Activated CD4-positive, alpha-beta memory T cell treated with anti-CD3 and anti-CD28 coated beads for 36 hours (primary cell): ENCODE measurements at regions of chr9 and their contacts with region 1.

Region 1: GRCh38 chr9:124126571-124127289 is 115.2 kb downstream of the LHX2 start:
- DNase-seq: peak; percentile 87
- H3K4me3 Mint-ChIP-seq: no peak overlapping the region
- H3K27ac Mint-ChIP-seq: no peak overlapping the region
- H3K4me1 Mint-ChIP-seq: peaks cover 4% of the 10 kb centered on the region
- H3K27me3 Mint-ChIP-seq: no peaks in the 10 kb centered on the region

Region 2: GRCh38 chr9:124218438-124218982 is 91.8 kb after region 1 on chr9:
- CTCF ChIA-PET with region 1: interaction called, 12 read pairs
- POLR2A ChIA-PET with region 1: no interaction called
- intact Hi-C with region 1: no loop called
- DNase-seq: peak; percentile 76
- H3K4me3 Mint-ChIP-seq: no peak overlapping the region
- H3K27ac Mint-ChIP-seq: peak overlapping the region; percentile 25
- H3K4me1 Mint-ChIP-seq: peaks cover 56% of the 10 kb centered on the region
- H3K27me3 Mint-ChIP-seq: no peaks in the 10 kb centered on the region

Region 3: DNA sequence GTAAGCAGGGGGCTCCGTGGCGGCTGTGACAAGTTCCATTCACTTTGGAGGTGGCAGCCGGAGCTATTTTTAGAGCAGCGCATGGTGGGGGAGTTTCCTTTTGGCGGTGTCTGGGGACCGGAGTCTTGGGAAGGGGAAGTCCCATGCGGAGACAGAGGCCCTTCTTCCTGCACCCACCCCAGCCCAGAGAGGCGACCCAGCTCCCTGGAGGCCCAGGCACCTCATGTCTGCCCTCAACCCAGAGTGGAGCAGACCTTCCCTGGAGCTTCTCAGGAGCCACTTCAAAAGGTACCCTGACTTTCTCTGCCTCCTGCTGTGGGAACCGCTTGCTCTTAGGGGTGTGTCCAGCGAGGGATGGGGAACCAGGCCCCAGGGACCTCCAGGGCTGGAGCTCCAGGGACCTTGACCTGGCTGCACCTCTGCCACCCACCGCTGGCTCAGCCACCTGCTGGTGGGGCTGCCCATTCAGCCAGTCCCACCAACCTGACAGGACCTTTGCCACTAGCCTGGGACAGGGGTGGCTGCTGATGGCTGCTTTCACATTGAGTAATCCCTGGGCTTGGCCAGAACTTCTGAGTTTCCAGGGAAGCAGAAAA is 165.2 kb after region 1 on chr9:
- CTCF ChIA-PET with region 1: interaction called, 14 read pairs
- POLR2A ChIA-PET with region 1: no interaction called
- intact Hi-C with region 1: no loop called
- DNase-seq: peak; percentile 76
- H3K4me3 Mint-ChIP-seq: peak overlapping the region; percentile 26
- H3K27ac Mint-ChIP-seq: peak overlapping the region; percentile 38
- H3K4me1 Mint-ChIP-seq: peaks cover 39% of the 10 kb centered on the region
- H3K27me3 Mint-ChIP-seq: no peaks in the 10 kb centered on the region

Region 4: DNA sequence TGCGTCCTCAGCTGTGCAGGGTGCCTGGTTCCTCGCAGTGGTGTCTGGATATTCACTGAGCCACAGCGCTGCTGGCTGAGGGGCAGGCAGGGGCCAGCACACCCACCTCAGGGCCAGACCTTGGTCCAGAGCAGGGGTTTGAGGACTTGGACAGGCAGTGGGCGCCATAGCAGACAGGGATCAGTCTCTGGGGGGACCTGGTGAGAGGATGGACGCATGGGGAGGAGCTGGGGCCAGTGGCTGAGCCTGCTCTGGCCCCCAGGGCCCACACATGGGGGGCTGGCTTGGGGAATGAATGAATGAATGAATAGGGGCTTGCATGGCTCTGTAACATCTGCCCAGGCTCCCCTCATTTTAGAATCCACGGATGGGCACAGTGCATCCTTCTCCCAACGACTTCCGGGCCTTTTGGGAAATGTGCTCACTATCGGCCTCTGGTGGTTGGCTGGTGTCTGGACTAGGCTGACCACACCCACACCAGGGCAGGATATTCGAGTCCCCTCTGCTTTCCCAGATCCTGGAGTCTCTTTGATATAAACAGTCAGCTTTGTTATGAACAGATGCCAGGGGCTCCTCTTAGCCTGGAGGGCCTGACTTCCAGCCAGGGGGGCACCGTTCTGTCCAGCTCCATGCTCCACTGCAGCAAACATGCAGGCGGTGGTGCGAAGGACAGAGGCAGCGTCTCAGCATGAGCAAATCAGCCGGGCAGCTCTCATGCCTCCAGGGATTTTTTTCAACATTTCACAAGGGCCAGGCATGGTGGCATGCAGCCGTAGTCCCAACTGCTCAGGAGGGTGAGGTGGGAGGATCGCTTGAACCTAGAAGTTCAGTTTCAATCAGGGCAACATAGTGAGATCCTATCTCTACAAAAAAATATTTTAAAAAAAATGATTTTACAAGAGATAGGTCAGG is 193.6 kb after region 1 on chr9:
- CTCF ChIA-PET with region 1: interaction called, 63 read pairs
- POLR2A ChIA-PET with region 1: no interaction called
- intact Hi-C with region 1: loop called (anchors 2 kb)
- DNase-seq: peak; percentile 70
- H3K4me3 Mint-ChIP-seq: no peak overlapping the region
- H3K27ac Mint-ChIP-seq: no peak overlapping the region
- H3K4me1 Mint-ChIP-seq: peaks cover 4% of the 10 kb centered on the region
- H3K27me3 Mint-ChIP-seq: no peaks in the 10 kb centered on the region

Region 5: GRCh38 chr9:124457887-124458431 is 331.2 kb after region 1 on chr9:
- CTCF ChIA-PET with region 1: no interaction called
- POLR2A ChIA-PET with region 1: no interaction called
- intact Hi-C with region 1: no loop called
- DNase-seq: no peak
- H3K4me3 Mint-ChIP-seq: no peak overlapping the region
- H3K27ac Mint-ChIP-seq: no peak overlapping the region
- H3K4me1 Mint-ChIP-seq: no peaks in the 10 kb centered on the region
- H3K27me3 Mint-ChIP-seq: peaks cover 3% of the 10 kb centered on the region

Region 6: GRCh38 chr9:124532897-124533296 is 406.2 kb after region 1 on chr9:
- CTCF ChIA-PET with region 1: interaction called, 5 read pairs
- POLR2A ChIA-PET with region 1: no interaction called
- intact Hi-C with region 1: loop called (anchors 10 kb)
- DNase-seq: no peak
- H3K4me3 Mint-ChIP-seq: no peak overlapping the region
- H3K27ac Mint-ChIP-seq: no peak overlapping the region
- H3K4me1 Mint-ChIP-seq: no peaks in the 10 kb centered on the region
- H3K27me3 Mint-ChIP-seq: no peaks in the 10 kb centered on the region